Mammary epithelial cell (primary cell): ENCODE measurements at regions of chr4 and their contacts with region 1.

Region 1: DNA sequence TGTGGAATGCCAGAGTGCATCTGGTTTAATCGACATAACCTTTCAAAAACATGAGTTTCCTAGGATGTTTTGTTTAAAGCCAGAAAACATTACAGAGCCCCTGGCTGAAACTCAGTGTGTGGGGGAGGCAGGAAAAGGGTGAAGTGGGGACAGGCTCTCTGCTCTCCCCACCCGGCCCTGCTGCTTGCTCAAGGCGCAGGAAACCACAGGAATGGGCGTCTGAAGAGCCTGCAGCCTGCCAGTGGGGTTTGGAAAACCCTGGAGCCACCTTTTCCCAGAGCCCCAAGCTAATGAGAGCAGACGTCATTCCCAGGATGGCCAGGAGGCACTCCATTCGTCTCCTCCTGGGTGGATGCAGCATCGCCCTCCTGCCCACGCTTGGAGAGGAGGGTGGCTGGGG is 240.6 kb downstream of the AFAP1 start:
- DNase-seq: peak; percentile 74
- H3K4me3 ChIP-seq: no peak overlapping the region
- H3K27ac ChIP-seq: peak overlapping the region; percentile 20
- H3K4me1 ChIP-seq: peaks cover 35% of the 10 kb centered on the region
- H3K27me3 ChIP-seq: no peaks in the 10 kb centered on the region
- CTCF ChIP-seq: no peak

Region 2: GRCh38 chr4:7524064-7524682 is 174.9 kb before region 1 on chr4:
- CTCF ChIA-PET with region 1: no interaction called
- dilution Hi-C with region 1: loop called (anchors 10 kb)
- in situ Hi-C with region 1: no loop called
- intact Hi-C with region 1: no loop called
- DNase-seq: no peak
- H3K4me3 ChIP-seq: no peak overlapping the region
- H3K27ac ChIP-seq: no peak overlapping the region
- H3K4me1 ChIP-seq: no peaks in the 10 kb centered on the region
- H3K27me3 ChIP-seq: peaks cover 7% of the 10 kb centered on the region
- CTCF ChIP-seq: no peak

Region 3: DNA sequence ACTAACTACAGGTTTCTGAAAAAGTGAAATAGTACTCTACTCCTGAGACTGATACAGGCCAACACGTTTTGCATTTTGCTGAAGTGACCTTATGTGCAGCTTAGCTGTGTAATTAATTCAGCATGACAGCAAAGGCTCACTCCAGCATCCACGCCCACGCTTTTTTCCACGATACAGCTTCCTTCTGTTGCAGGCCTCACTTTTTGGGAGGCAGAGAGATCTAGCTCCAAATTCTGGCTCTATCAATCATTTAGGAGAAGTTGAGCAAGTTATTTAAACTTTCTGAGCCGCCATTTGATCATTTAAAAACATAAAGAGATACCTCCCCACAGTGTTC is 80.4 kb after region 1 on chr4:
- CTCF ChIA-PET with region 1: no interaction called
- dilution Hi-C with region 1: loop called (anchors 5 kb)
- in situ Hi-C with region 1: no loop called
- intact Hi-C with region 1: no loop called
- DNase-seq: no peak
- H3K4me3 ChIP-seq: no peak overlapping the region
- H3K27ac ChIP-seq: no peak overlapping the region
- H3K4me1 ChIP-seq: no peaks in the 10 kb centered on the region
- H3K27me3 ChIP-seq: no peaks in the 10 kb centered on the region
- CTCF ChIP-seq: no peak